WTC11 (cell line): ENCODE measurements at regions of chr10 and their contacts with region 1.

Region 1: GRCh38 chr10:93718937-93719725 is 16.7 kb upstream of the FRA10AC1 start:
- DNase-seq: no peak
- ATAC-seq: peak; percentile 67
- H3K4me3 Mint-ChIP-seq: no peak overlapping the region
- H3K27ac Mint-ChIP-seq: no peak overlapping the region
- H3K4me1 Mint-ChIP-seq: peaks cover 14% of the 10 kb centered on the region
- H3K27me3 Mint-ChIP-seq: peaks cover 2% of the 10 kb centered on the region; the same call in 1 of the 2 replicates
- CTCF ChIP-seq: no peak

Region 2: DNA sequence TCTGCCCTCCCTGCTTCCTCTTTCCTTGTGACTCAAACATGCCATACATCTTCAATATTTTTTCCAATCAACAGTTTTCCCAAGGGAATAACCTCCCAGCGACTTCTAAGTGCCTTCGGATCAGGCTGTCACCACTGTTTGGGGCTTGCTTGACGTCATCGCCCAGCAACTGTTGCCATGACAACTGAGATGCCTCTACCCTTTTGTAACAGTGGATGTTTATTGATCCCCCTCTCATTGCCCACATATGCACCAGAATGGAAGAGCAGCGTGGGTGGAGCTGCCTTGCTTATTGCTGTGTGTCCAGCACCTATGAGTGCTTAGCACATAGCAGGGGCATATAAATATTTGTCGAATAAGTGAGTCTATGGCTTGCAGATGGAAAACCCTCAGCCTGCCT is 138.3 kb before region 1 on chr10:
- CTCF ChIA-PET with region 1: no interaction called
- POLR2A ChIA-PET with region 1: no interaction called
- DNase-seq: peak; percentile 31
- ATAC-seq: no peak
- H3K4me3 Mint-ChIP-seq: no peak overlapping the region
- H3K27ac Mint-ChIP-seq: no peak overlapping the region
- H3K4me1 Mint-ChIP-seq: no peaks in the 10 kb centered on the region
- H3K27me3 Mint-ChIP-seq: peaks cover 2% of the 10 kb centered on the region
- CTCF ChIP-seq: no peak

Region 3: DNA sequence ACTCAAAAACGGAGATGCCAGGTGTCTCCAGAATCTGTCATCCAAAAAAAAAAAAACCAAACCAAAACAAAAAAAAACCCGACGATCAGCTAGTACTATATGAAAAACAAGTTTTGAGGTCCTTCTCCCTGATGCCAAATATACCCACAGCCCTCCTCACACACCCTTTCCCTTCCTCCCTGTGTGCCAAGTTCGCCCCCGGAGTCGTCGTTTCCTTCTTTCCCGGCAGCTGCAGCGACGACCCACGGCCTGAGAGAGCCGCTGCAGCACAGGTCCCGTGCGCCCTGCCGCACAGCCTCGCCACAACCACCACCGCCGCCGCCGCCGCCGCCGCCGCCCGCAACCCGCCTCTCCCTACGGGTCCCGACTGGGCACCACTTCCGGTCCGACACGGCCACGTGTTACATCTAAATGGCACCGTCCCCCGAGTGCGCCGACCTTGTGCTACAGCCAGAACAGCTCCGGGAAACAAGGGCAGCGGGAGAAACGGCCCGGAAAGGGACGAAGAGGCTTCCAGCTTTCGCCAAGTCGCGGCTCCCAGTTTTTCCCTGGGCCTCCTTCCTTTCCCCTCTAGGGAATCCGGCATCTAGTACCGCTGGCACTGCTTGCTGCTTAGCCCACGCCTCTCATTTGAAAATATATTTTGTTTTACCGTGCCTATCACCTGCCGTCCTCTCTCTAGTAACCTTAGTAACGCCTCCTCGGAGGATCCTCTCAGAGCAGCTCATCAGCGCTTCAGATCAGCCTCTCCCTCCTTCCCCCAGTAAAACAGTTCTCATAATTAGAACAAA is 16.7 kb before region 1 on chr10 and contains the start of gene FRA10AC1:
- CTCF ChIA-PET with region 1: interaction called, 10 read pairs
- POLR2A ChIA-PET with region 1: no interaction called
- DNase-seq: peak; percentile 90
- ATAC-seq: peak; percentile 94
- H3K4me3 Mint-ChIP-seq: no peak within 1 kb of the TSS
- H3K27ac Mint-ChIP-seq: no peak within 1 kb of the TSS
- H3K4me1 Mint-ChIP-seq: peaks cover 14% of the 10 kb centered on the region
- H3K27me3 Mint-ChIP-seq: peaks cover under 1% of the 10 kb centered on the region
- CTCF ChIP-seq: no peak
- total RNA-seq, gene FRA10AC1: 12.9 to 15.8 TPM (median 14.1 TPM) in 3 replicates

Region 4: GRCh38 chr10:93893646-93894515 is 174.8 kb after region 1 on chr10 and contains the start of gene SLC35G1:
- CTCF ChIA-PET with region 1: no interaction called
- POLR2A ChIA-PET with region 1: no interaction called
- DNase-seq: peak; percentile 70
- ATAC-seq: peak; percentile 79
- H3K4me3 Mint-ChIP-seq: peak within 1 kb of the TSS; percentile 82
- H3K27ac Mint-ChIP-seq: no peak within 1 kb of the TSS
- H3K4me1 Mint-ChIP-seq: peaks cover 38% of the 10 kb centered on the region
- H3K27me3 Mint-ChIP-seq: peaks cover 62% of the 10 kb centered on the region
- CTCF ChIP-seq: no peak
- total RNA-seq, gene SLC35G1: 5.1 to 6.6 TPM (median 5.3 TPM) in 3 replicates